AG04449 (cell line): ENCODE measurements at regions of chr22 and their contacts with region 1.

Region 1: DNA sequence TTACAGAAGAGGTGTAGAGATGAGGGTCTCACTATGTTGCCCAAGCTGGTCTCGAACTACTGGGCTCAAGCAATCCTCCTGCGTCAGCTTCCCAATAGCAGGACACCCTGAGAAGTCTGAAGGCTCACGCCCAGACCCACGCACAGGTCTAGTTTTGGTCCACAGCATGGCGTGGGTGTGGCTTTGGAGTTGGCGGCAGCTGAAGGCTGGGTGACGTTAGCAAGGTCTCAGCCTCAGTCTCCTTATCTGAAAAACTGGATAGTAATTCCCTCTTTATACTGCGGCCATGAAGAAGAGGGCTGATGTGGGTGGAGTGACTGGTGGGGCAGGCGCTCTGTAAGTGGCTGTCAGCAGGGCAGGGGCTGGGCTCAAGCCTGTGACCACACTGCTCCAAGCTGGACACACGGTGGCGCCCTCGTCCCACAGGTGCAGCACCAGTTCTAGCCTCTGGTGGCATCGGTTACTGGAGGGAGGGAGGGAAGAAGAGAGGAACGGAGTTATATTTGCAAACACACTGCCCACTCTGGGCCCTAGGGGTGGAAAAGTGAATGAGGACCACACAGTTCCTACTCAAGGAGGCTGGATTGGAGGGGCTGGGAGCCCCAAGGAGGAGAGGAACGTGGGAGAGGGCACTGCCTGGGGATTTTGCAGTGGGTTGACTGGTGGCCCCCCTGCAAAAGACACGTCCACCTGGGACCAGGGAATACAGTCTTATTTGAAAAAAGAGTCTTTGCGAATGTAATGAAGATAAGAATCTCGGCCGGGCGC is 19.6 kb upstream of the CARD10 start:
- DNase-seq: peak; percentile 47
- H3K4me3 ChIP-seq: no peak overlapping the region
- CTCF ChIP-seq: peak; percentile 98

Region 2: GRCh38 chr22:37508431-37508992 is 30.3 kb before region 1 on chr22:
- CTCF ChIA-PET with region 1: no interaction called
- POLR2A ChIA-PET with region 1: no interaction called
- DNase-seq: no peak
- H3K4me3 ChIP-seq: no peak overlapping the region
- CTCF ChIP-seq: no peak

Region 3: GRCh38 chr22:37525073-37525748 is 13.6 kb before region 1 on chr22:
- CTCF ChIA-PET with region 1: interaction called, 28 read pairs
- POLR2A ChIA-PET with region 1: no interaction called
- DNase-seq: peak; percentile 37
- H3K4me3 ChIP-seq: no peak overlapping the region; the same call in 1 of the 2 replicates
- CTCF ChIP-seq: no peak

Region 4: DNA sequence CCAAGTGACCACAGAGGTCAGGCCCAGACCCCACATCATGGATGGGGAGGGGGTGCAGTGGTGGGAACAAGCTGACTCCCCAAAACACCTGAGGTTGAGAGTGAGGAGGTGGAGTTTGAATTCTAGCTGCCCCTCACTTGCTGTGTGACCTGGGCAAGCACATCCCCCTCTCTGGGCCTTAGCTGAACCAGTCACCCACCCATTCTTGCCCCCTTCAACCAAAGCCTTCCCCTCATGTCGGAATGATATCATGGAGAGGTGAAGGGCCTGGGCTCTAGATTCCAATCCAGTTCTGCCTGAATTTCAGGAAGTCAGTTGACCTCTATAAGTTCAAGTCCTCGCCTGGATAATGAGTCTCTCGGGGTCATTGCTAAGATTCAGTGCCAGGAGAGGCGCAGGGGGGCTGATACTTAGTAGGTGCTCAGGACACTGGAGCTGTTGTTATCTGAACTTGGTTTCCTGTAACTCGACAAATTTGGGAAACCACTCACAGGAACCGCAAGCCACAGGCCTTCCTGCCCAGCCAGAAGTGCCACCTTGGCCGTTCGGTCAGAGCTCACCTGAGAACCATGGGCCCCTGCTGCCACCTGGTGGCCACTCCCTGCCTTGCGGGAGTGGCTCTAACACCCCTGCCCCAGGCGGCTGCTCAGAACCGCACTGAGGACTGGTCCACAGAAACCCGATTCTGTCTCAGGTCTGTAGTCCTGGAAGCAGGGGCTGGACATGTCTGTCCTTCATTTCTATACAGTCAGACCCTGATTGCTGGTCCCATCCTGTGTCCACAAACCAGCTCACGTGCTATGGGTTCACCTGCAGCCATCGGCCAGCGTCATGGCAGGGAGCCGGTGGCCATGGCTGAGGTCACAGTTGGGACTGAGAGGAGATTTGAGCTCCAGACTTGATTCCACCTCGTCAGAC is 28.4 kb after region 1 on chr22:
- CTCF ChIA-PET with region 1: interaction called, 728 read pairs
- POLR2A ChIA-PET with region 1: interaction called, 4 read pairs
- DNase-seq: no peak
- H3K4me3 ChIP-seq: no peak overlapping the region
- CTCF ChIP-seq: peak; percentile 83

Region 5: GRCh38 chr22:37581504-37581903 is 42.7 kb after region 1 on chr22:
- CTCF ChIA-PET with region 1: interaction called, 728 read pairs
- POLR2A ChIA-PET with region 1: no interaction called
- DNase-seq: no peak
- H3K4me3 ChIP-seq: no peak overlapping the region
- CTCF ChIP-seq: no peak

Region 6: GRCh38 chr22:37708580-37709444 is 170.0 kb after region 1 on chr22:
- CTCF ChIA-PET with region 1: no interaction called
- POLR2A ChIA-PET with region 1: no interaction called
- DNase-seq: no peak
- H3K4me3 ChIP-seq: no peak overlapping the region
- CTCF ChIP-seq: no peak